Prostate gland (tissue), 2 donors: ENCODE measurements at regions of chr20 and their contacts with region 1.

Region 1: DNA sequence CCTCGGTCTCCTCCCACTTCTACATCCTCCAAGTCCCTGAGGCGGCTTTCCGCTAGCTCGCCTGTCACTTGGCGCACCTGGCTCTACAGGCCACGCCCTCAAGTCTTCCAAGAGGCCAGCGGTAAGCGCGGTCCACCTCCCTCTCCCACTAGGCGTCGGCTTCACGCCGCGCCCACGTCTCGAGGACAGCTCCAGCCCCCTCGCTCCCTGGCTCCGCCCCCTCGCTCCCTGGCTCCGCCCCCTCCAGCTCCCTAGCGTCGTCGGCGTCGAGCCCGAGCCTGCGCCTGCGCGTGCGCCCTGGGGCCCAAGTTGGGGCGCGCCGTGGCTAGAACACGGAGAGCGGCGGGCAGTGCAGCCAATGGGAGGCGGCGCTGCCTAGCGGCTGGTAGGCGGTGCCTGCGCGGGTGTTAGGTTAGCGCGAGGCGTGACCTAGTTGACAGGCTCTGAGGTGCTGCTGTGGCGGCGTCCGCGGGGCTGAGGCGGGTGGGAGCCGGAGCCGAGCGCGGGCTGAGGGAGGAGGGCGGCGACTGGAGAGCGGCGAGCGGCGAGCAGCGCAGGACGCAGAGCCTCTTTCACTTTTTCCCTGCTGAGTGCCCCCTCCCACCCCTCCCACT is at the start of gene MACROD2:
- DNase-seq: peak; percentile 87
- H3K4me3 ChIP-seq: peak within 1 kb of the TSS; percentile 65 to 76
- H3K27ac ChIP-seq: peak within 1 kb of the TSS; percentile 71 to 73
- H3K4me1 ChIP-seq: no peaks in the 10 kb centered on the region
- H3K27me3 ChIP-seq: no peaks in the 10 kb centered on the region
- CTCF ChIP-seq: peak in 2 of 4 experiments; percentile 33 to 43
- POLR2A ChIP-seq: peak; percentile 69
- total RNA-seq, gene MACROD2: 8.0 to 19.4 TPM

Region 2: GRCh38 chr20:13567663-13568062 is 427.5 kb before region 1 on chr20:
- intact Hi-C with region 1: no loop called
- DNase-seq: no peak
- H3K4me3 ChIP-seq: no peak overlapping the region
- H3K27ac ChIP-seq: no peak overlapping the region
- H3K4me1 ChIP-seq: no peaks in the 10 kb centered on the region
- H3K27me3 ChIP-seq: no peaks in the 10 kb centered on the region
- CTCF ChIP-seq: no peak
- POLR2A ChIP-seq: no peak

Region 3: DNA sequence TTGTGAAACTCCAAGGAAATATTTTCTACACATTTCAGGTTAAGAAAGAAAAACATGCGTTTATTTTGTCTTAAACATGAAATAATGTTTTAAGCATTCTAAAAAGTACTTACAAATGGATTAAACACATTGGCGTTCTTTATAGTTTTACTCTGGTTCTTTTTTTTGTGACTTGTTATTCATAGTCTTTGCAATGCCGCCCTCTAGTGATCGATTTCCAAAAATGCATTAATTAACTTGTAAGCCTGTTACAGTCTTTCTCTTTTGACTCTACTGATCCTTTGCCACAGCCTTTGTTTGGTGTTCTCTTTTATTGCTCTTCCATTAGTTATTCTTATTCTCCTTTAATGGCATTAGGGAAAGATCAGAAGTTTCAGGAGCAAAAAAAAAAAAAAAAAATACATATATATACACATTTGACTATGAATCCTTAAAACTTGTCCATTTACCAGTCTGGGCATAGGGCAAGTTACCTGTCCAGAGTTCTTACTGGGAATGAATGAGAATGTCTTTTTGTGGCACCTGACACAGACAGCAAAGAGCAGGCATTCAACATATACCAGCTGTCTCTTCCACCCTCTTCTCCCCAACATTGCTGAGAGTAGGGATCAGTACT is 60.0 kb after region 1 on chr20:
- intact Hi-C with region 1: loop called (anchors 10 kb)
- DNase-seq: peak; percentile 55
- H3K4me3 ChIP-seq: no peak overlapping the region
- H3K27ac ChIP-seq: no peak overlapping the region
- H3K4me1 ChIP-seq: no peaks in the 10 kb centered on the region
- H3K27me3 ChIP-seq: no peaks in the 10 kb centered on the region
- CTCF ChIP-seq: peak; percentile 30 to 69 (median 59)
- POLR2A ChIP-seq: no peak